K562 (cell line): ENCODE measurements at regions of chr7 and their contacts with region 1.

Region 1: GRCh38 chr7:130174237-130174959 is 30.8 kb downstream of the TMEM209 start:
- DNase-seq: no peak
- ATAC-seq: no peak
- H3K4me3 ChIP-seq: no peak overlapping the region
- H3K27ac ChIP-seq: no peak overlapping the region
- H3K4me1 ChIP-seq: no peaks in the 10 kb centered on the region
- H3K27me3 ChIP-seq: no peaks in the 10 kb centered on the region
- CTCF ChIP-seq: no peak
- EP300 ChIP-seq: no peak
- POLR2A ChIP-seq: no peak
- RAD21 ChIP-seq: no peak

Region 2: DNA sequence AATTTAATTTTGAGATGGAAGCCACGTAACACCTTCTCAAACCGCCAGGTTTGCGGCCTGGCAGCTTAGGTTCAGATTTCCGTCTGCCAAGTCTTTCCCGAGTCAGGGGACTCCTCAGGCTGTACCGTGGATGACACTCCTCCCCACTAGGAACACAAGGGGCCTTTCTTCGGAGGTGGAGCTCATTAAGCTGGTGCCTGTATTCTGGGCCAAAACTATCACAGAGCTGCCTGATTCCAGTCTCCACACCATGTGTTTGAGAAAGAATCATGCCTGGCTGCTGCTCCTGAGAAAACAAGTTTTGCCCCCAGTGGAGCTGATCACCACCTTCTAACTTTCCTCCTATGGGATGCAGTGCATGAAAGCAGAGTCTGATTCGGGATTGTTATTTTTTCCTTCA is 13.9 kb before region 1 on chr7:
- CTCF ChIA-PET with region 1: no interaction called
- POLR2A ChIA-PET with region 1: interaction called, 34 read pairs
- in situ Hi-C with region 1: no loop called
- intact Hi-C with region 1: no loop called
- DNase-seq: no peak
- ATAC-seq: no peak
- H3K4me3 ChIP-seq: no peak overlapping the region
- H3K27ac ChIP-seq: no peak overlapping the region
- H3K4me1 ChIP-seq: no peaks in the 10 kb centered on the region
- H3K27me3 ChIP-seq: no peaks in the 10 kb centered on the region
- CTCF ChIP-seq: no peak
- EP300 ChIP-seq: no peak
- POLR2A ChIP-seq: no peak
- RAD21 ChIP-seq: no peak

Region 3: DNA sequence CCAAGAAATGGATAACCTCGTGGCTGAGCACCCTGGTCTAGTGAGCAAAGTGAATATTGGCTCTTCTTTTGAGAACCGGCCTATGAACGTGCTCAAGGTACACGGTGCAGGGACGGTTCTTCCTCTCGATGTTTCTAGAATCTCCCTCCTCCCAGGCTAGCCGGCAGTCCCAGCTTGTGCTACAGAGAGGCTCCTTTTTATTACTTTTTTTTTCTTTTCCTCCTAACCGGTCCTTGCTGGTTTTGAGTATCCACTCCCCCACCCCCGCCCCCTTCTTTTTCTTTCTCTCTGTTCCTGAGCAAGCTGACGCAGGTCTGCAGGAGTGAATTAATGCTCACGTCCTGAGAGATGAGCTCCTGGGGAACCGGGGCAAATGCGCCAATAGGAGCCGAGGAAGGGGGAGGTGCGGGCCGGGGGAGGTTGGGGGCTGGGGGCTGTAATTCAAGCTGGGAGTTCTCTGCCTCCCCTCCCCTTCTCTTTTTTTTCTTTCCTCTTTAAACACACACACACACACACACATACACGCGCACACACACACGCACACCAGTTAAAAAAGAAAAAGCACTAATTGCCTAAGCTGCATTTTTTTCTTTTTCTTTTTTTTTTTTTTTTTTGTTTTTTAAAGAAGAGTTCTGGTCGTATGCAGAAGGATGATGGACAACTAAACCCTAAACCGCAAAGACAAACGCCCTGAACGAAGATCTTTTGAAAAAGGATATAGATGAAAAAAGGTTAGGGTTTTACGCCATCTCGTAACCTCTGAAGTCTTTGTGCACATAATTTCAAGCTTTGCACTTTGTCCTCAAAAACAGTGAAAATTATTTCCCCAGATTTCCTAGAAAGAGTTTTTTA is 98.9 kb after region 1 on chr7:
- CTCF ChIA-PET with region 1: no interaction called
- POLR2A ChIA-PET with region 1: no interaction called
- in situ Hi-C with region 1: no loop called
- intact Hi-C with region 1: no loop called
- DNase-seq: peak in 2 of 4 experiments; percentile 31 to 42
- ATAC-seq: peak; percentile 41
- H3K4me3 ChIP-seq: no peak overlapping the region
- H3K27ac ChIP-seq: no peak overlapping the region
- H3K4me1 ChIP-seq: peaks cover 8 to 9% of the 10 kb centered on the region in 2 experiments; a peak in 4 of 5 replicates
- H3K27me3 ChIP-seq: peaks cover 9 to 17% of the 10 kb centered on the region in 2 experiments
- CTCF ChIP-seq: no peak
- EP300 ChIP-seq: no peak
- POLR2A ChIP-seq: no peak
- RAD21 ChIP-seq: no peak

Region 4: DNA sequence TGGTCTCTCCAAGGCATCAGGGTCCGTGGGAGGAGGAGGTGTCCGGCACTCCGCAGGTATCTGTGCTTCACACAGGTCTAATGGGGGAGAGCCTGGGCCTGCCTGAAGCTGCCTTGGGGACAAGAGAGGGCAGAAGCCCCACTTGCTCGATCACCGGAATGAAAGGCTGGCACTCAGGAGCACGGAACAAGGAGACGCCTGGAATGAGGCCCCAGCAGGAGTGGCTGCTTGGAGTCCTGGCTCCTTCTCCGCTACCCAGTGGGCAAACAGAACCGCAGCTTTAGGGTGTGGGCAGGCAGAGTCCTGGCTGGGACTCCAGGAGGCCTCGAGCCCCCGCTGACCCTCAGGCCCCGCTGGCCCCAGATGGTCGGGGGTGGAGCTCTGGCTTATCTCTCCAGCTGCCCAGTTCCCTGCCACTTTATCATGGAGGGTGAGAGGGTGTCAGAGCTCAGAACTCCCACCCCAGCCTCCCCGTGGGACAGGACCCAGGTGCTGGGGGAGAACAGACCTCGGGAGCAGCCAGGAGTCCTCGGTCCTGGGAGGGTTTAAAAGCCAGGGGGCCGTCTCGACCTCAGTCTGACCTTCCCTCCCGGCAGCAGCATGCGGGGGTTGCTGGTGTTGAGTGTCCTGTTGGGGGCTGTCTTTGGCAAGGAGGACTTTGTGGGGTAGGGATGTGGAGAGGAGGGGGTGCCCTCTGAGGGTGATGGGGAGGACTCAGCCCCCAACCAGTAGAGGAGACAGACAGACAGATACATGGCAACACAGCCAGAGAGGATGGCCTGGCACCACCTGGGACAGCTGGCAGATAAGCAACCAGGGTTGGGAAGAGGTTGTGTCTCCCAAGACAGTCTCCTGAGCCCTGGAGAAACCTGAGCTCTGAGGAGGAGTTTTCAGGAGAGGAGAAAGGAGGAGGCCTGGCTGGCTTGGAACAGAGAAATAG is 205.8 kb after region 1 on chr7 and contains the start of gene CPA1:
- CTCF ChIA-PET with region 1: no interaction called
- POLR2A ChIA-PET with region 1: no interaction called
- in situ Hi-C with region 1: no loop called
- intact Hi-C with region 1: no loop called
- DNase-seq: no peak
- ATAC-seq: no peak; the same call in 1 of the 3 replicates
- H3K4me3 ChIP-seq: no peak within 1 kb of the TSS
- H3K27ac ChIP-seq: no peak within 1 kb of the TSS
- H3K4me1 ChIP-seq: peaks cover 7 to 22% of the 10 kb centered on the region in 2 experiments; a peak in 4 of 5 replicates
- H3K27me3 ChIP-seq: peaks cover 5 to 35% of the 10 kb centered on the region in 2 experiments; a peak in 4 of 5 replicates
- CTCF ChIP-seq: no peak
- EP300 ChIP-seq: no peak
- POLR2A ChIP-seq: no peak
- RAD21 ChIP-seq: no peak
- polyA plus RNA-seq, gene CPA1: not detected